ENCODE measurements at regions of chr1 and their contacts with region 1.

Region 1: GRCh38 chr1:214123061-214123784 is 135.4 kb downstream of the PROX1 start:
- DNase-seq: peak; percentile 88
- H3K4me3 ChIP-seq: no peak overlapping the region
- H3K27ac ChIP-seq: peak overlapping the region; percentile 75
- H3K4me1 ChIP-seq: peaks cover 25% of the 10 kb centered on the region
- H3K27me3 ChIP-seq: no peaks in the 10 kb centered on the region
- CTCF ChIP-seq: peak; percentile 64 to 67
- POLR2A ChIP-seq: no peak

Region 2: GRCh38 chr1:213122514-213122929 is 1000.7 kb before region 1 on chr1:
- CTCF ChIA-PET with region 1: interaction called, 11 read pairs
- POLR2A ChIA-PET with region 1: no interaction called
- dilution Hi-C with region 1: no loop called
- intact Hi-C with region 1: loop called (anchors 1 kb)
- DNase-seq: peak; percentile 66
- H3K4me3 ChIP-seq: no peak overlapping the region
- H3K27ac ChIP-seq: no peak overlapping the region
- H3K4me1 ChIP-seq: peaks cover 39% of the 10 kb centered on the region
- H3K27me3 ChIP-seq: no peaks in the 10 kb centered on the region
- CTCF ChIP-seq: peak; percentile 18 to 21
- POLR2A ChIP-seq: no peak

Region 3: DNA sequence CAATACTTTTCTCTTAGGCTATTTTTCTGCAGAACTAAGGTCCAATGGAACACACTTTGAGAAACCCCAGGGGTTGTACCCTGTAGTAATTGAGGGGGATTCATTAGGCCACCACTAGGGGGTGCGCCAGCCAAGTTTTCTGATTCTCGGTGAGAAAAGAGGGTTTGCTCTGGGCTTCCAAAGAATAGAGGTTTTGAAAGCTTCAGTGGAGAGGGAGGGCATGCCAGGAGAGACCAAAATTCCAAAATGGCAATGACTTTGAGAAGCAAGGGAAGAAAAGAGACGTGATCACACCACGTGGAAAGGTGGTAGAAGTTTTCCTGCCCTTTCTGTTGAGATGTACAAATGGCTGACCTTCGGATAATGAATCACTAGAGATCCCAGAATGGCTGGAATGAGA is 748.9 kb before region 1 on chr1:
- CTCF ChIA-PET with region 1: interaction called, 36 read pairs
- POLR2A ChIA-PET with region 1: interaction called, 13 read pairs
- dilution Hi-C with region 1: no loop called
- intact Hi-C with region 1: loop called (anchors 1 kb)
- DNase-seq: peak; percentile 61
- H3K4me3 ChIP-seq: no peak overlapping the region
- H3K27ac ChIP-seq: no peak overlapping the region
- H3K4me1 ChIP-seq: no peaks in the 10 kb centered on the region
- H3K27me3 ChIP-seq: no peaks in the 10 kb centered on the region
- CTCF ChIP-seq: peak; percentile 84 to 95
- POLR2A ChIP-seq: no peak

Region 4: GRCh38 chr1:213761845-213762407 is 361.3 kb before region 1 on chr1:
- CTCF ChIA-PET with region 1: interaction called, 5 read pairs
- POLR2A ChIA-PET with region 1: no interaction called
- dilution Hi-C with region 1: no loop called
- intact Hi-C with region 1: loop called (anchors 2 kb)
- DNase-seq: peak; percentile 63
- H3K4me3 ChIP-seq: no peak overlapping the region
- H3K27ac ChIP-seq: no peak overlapping the region
- H3K4me1 ChIP-seq: peaks cover 13% of the 10 kb centered on the region
- H3K27me3 ChIP-seq: no peaks in the 10 kb centered on the region
- CTCF ChIP-seq: no peak
- POLR2A ChIP-seq: no peak

Region 5: DNA sequence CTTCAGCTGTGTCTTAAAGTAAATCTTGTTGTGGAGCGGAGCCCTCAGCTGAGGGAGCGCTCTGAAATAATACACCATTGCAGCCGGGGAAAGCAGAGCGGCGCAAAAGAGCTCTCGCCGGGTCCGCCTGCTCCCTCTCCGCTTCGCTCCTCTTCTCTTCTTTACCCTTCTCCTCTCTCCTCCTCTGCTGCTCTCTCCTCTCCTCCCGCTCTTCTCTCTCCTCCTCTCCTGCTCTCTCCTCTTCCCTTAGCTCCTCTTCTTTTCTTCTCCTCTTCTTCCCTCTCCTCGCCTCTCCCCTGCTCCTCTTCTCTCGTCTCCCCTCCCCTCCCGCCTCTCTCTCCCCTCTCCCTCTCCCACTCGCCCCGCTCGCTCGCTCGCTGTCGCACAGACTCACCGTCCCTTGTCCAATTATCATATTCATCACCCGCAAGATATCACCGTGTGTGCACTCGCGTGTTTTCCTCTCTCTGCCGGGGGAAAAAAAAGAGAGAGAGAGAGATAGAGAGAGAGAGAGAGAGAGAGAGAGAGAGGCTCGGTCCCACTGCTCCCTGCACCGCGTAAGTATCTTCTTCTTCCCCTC is 135.2 kb before region 1 on chr1 and contains the start of gene PROX1:
- CTCF ChIA-PET with region 1: interaction called, 48 read pairs
- POLR2A ChIA-PET with region 1: interaction called, 7 read pairs
- dilution Hi-C with region 1: no loop called
- intact Hi-C with region 1: loop called (anchors 1 kb)
- DNase-seq: no peak
- H3K4me3 ChIP-seq: peak within 1 kb of the TSS; percentile 45 to 91 (median 79)
- H3K27ac ChIP-seq: peak within 1 kb of the TSS; percentile 65
- H3K4me1 ChIP-seq: peaks cover 16% of the 10 kb centered on the region
- H3K27me3 ChIP-seq: peaks cover 33 to 42% of the 10 kb centered on the region in 2 experiments
- CTCF ChIP-seq: peak in 1 of 2 donors; percentile 0
- POLR2A ChIP-seq: peak; percentile 85
- total RNA-seq, gene PROX1: 3.3 and 4.0 TPM in 2 replicates

Region 6: DNA sequence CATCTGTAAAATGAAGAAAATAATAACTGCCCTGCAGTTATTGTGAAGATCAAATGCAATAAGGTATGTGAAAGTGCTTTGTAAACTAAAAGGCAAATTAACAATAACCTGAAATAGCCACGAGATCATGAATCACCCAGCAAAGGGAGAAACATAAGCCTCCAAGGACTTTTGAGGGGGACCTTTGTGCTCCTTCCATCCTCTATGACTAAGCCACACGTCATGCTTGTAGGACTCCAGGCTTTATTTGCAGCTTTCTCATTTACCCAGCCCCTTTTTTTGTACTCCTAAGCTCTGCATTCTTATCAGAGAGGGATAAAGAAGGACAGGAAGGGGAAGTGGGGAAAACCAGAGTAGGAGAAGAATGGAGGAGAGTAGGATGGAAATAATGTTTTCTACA is 20.3 kb before region 1 on chr1:
- CTCF ChIA-PET with region 1: interaction called, 27 read pairs
- POLR2A ChIA-PET with region 1: no interaction called
- dilution Hi-C with region 1: no loop called
- intact Hi-C with region 1: no loop called
- DNase-seq: peak; percentile 91
- H3K4me3 ChIP-seq: no peak overlapping the region
- H3K27ac ChIP-seq: peak overlapping the region; percentile 76
- H3K4me1 ChIP-seq: peaks cover 25% of the 10 kb centered on the region
- H3K27me3 ChIP-seq: no peaks in the 10 kb centered on the region
- CTCF ChIP-seq: no peak
- POLR2A ChIP-seq: no peak

Region 7: GRCh38 chr1:214213136-214213535 is 89.9 kb after region 1 on chr1:
- CTCF ChIA-PET with region 1: interaction called, 10 read pairs
- POLR2A ChIA-PET with region 1: no interaction called
- dilution Hi-C with region 1: no loop called
- intact Hi-C with region 1: no loop called
- DNase-seq: no peak
- H3K4me3 ChIP-seq: no peak overlapping the region
- H3K27ac ChIP-seq: no peak overlapping the region
- H3K4me1 ChIP-seq: peaks cover 7% of the 10 kb centered on the region
- H3K27me3 ChIP-seq: peaks cover 6 to 16% of the 10 kb centered on the region in 2 experiments
- CTCF ChIP-seq: no peak
- POLR2A ChIP-seq: no peak

Measured in endothelial cell of umbilical vein (primary cell).